AG04449 (cell line): ENCODE measurements at regions of chr6 and their contacts with region 1.

Region 1: DNA sequence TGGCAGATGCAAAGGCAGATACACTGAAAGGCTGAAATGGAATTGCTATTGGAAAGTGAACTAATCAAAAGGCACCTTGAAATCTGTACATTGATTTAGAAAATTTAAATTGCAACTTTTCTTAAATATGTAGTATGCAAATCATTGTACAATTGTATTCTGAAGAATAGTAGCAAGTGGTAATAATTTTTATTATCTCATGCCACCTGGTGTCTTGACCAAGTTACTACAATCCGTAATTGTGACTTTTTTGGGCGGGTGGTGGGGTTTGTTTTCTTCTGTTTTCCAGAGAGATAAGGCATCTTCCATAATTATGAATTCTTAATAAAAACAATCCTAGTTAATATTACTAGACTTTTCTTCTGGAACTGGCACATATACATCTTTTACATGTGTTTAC is 12.5 kb upstream of the BCKDHB start:
- DNase-seq: no peak
- H3K4me3 ChIP-seq: no peak overlapping the region
- CTCF ChIP-seq: peak; percentile 30

Region 2: DNA sequence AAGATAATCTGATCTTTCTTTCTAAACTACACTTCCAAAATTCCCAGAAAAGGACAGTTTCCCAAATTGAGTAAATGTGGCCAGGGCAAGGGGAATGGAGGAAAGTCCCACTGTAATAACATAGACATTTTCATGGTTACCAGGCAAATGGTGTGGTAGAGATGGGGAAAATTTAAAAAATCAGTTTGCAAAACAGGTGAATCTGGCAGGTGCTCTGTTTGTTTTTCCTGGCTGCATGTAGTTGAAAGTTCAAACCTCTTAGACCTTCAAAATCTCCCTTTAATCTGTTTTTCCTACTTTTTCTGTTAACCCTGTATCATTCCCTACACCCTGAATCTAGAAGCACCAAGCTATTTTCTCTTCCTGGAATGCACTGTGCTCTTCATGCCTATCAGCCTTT is 10.5 kb after region 1 on chr6:
- CTCF ChIA-PET with region 1: interaction called, 13 read pairs
- POLR2A ChIA-PET with region 1: no interaction called
- DNase-seq: no peak
- H3K4me3 ChIP-seq: no peak overlapping the region
- CTCF ChIP-seq: no peak